SK-N-SH (cell line): ENCODE measurements at regions of chr17 and their contacts with region 1.

Region 1: DNA sequence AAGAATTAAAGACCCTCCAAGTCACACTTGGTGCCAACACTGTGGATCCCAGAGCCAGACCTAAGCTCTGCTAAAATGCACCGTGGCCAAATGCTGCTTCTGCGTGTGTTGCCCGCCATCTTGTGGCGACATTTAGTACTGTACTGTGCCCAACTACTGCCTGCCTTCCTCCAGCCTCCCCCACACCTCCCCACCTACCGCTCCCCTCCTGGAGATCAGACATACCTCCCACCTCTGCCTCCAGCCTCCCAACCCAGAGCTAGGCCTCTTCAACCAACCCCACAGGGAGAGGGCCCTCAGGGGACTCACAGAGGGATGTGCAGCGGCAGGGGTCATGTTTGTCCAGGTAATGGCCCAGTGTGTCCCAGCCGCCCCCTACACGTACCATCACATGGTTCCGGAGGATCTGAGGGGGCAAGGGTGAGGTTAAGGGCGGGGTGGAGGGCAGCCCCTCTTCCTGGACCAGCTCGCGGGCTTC is 5.5 kb downstream of the GAS2L2 start:
- DNase-seq: peak; percentile 89
- H3K4me3 ChIP-seq: no peak overlapping the region; a peak in 1 of 4 replicates
- H3K27ac ChIP-seq: no peak overlapping the region
- H3K4me1 ChIP-seq: peaks cover 0 to 15% of the 10 kb centered on the region in 2 experiments; a peak in 1 of 4 replicates
- H3K27me3 ChIP-seq: peaks cover 11% of the 10 kb centered on the region
- CTCF ChIP-seq: peak; percentile 83
- EP300 ChIP-seq: no peak
- RAD21 ChIP-seq: peak; percentile 98

Region 2: DNA sequence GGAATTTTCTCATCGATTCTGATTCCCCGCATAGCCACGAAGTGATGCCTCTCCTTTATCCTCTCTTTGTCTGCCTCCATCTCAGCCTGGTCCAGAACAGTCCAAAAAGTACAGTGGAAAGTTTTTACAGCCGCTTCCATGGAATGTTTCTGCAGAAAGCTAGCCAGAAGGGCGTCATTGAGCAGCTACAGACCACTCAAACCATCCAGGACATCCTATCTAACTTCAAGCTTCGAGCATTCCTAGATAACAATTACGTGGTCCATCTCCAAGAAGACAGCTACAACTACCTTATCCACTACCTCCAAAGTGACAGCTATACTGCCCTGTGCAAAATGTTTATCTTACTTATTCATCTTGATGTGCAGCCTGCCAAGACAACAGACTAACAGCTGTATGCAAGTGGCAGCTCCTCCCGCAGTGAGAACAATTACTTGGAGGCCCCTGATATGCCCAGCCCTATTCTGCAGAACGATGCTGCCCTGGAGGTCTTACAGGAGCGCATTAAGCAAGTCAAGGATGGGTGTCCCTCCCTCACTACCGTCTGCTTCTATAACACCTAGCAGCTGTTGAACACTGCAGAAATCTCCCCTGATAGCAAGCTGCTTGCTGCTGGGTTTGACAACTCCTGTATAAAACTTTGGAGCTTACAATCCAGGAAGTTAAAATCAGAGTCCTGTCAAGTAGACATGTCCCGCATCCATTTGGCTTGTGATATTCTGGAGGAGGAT is 249.0 kb before region 1 on chr17:
- CTCF ChIA-PET with region 1: no interaction called
- POLR2A ChIA-PET with region 1: no interaction called
- DNase-seq: no peak
- H3K4me3 ChIP-seq: no peak overlapping the region
- H3K27ac ChIP-seq: no peak overlapping the region
- H3K4me1 ChIP-seq: no peaks in the 10 kb centered on the region
- H3K27me3 ChIP-seq: peaks cover 66% of the 10 kb centered on the region
- CTCF ChIP-seq: no peak
- EP300 ChIP-seq: no peak
- RAD21 ChIP-seq: no peak

Region 3: GRCh38 chr17:35560703-35561102 is 186.9 kb before region 1 on chr17 and contains the start of gene SLFN14:
- CTCF ChIA-PET with region 1: interaction called, 15 read pairs
- POLR2A ChIA-PET with region 1: no interaction called
- DNase-seq: no peak
- H3K4me3 ChIP-seq: no peak within 1 kb of the TSS
- H3K27ac ChIP-seq: no peak within 1 kb of the TSS
- H3K4me1 ChIP-seq: no peaks in the 10 kb centered on the region
- H3K27me3 ChIP-seq: peaks cover 34% of the 10 kb centered on the region
- CTCF ChIP-seq: no peak
- EP300 ChIP-seq: no peak
- RAD21 ChIP-seq: no peak
- polyA plus RNA-seq, gene SLFN14: not detected in 2 replicates

Region 4: GRCh38 chr17:35605678-35606077 is 141.9 kb before region 1 on chr17:
- CTCF ChIA-PET with region 1: interaction called, 275 read pairs
- POLR2A ChIA-PET with region 1: no interaction called
- DNase-seq: no peak
- H3K4me3 ChIP-seq: no peak overlapping the region
- H3K27ac ChIP-seq: peak overlapping the region in 1 of 2 experiments; percentile 34; a peak in 2 of 4 replicates
- H3K4me1 ChIP-seq: no peaks in the 10 kb centered on the region
- H3K27me3 ChIP-seq: no peaks in the 10 kb centered on the region
- CTCF ChIP-seq: no peak
- EP300 ChIP-seq: no peak
- RAD21 ChIP-seq: no peak

Region 5: DNA sequence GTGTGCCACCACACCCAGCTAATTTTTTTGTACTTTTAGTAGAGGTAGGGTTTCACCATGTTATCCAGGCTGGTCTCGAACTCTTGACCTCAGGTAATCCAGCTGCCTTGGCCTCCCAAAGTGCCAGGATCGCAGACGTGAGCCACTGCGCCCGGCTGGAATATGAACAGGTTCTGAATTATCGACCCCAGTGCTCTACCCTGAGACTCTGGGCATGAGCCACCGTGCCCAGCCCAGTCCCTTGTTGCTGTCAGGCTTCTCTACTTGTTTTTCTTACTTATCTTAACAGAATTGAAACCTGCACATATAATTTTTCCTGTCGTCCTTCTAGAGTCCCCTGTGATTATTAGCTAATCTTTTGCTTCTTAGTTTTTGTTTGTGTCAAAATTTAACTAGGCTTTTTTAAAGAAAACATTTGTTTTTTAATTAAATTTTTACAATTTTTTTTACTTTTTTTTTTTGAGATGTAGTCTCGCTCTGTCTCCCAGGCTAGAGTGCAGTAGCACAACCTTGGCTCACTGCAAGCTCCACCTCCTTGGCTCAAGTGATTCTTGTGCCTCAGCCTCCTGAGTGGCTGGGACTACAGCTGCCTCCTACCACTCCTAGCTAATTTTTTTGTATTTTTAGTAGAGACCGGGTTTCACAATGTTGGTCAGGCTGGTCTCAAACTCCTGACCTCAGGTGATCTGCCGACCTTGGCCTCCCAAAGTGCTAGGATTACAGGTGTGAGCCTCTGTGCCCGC is 93.8 kb before region 1 on chr17:
- CTCF ChIA-PET with region 1: interaction called, 19 read pairs
- POLR2A ChIA-PET with region 1: no interaction called
- DNase-seq: no peak
- H3K4me3 ChIP-seq: no peak overlapping the region
- H3K27ac ChIP-seq: no peak overlapping the region
- H3K4me1 ChIP-seq: no peaks in the 10 kb centered on the region
- H3K27me3 ChIP-seq: no peaks in the 10 kb centered on the region
- CTCF ChIP-seq: no peak
- EP300 ChIP-seq: no peak
- RAD21 ChIP-seq: no peak

Region 6: DNA sequence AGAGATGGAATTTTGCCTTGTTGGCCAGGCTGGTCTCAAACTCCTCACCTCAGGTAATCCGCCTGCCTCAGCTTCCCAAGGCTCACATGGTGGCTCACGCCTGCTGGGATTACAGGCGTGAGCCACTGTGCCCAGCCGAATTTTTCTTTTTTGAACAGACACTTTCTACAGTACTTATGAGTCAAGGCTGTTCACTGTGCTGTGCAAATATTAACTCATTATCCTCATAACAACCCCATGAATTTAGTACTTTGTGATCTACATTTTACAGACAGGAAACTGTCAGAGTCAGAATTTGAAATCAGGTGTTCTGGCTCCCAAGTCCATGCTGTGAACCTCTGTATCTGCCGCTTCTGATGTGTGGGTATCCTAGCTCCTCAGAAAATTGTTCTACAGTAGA is 41.9 kb before region 1 on chr17:
- CTCF ChIA-PET with region 1: interaction called, 23 read pairs
- POLR2A ChIA-PET with region 1: interaction called, 5 read pairs
- DNase-seq: no peak
- H3K4me3 ChIP-seq: no peak overlapping the region
- H3K27ac ChIP-seq: no peak overlapping the region
- H3K4me1 ChIP-seq: no peaks in the 10 kb centered on the region
- H3K27me3 ChIP-seq: no peaks in the 10 kb centered on the region
- CTCF ChIP-seq: no peak
- EP300 ChIP-seq: no peak
- RAD21 ChIP-seq: no peak

Region 7: DNA sequence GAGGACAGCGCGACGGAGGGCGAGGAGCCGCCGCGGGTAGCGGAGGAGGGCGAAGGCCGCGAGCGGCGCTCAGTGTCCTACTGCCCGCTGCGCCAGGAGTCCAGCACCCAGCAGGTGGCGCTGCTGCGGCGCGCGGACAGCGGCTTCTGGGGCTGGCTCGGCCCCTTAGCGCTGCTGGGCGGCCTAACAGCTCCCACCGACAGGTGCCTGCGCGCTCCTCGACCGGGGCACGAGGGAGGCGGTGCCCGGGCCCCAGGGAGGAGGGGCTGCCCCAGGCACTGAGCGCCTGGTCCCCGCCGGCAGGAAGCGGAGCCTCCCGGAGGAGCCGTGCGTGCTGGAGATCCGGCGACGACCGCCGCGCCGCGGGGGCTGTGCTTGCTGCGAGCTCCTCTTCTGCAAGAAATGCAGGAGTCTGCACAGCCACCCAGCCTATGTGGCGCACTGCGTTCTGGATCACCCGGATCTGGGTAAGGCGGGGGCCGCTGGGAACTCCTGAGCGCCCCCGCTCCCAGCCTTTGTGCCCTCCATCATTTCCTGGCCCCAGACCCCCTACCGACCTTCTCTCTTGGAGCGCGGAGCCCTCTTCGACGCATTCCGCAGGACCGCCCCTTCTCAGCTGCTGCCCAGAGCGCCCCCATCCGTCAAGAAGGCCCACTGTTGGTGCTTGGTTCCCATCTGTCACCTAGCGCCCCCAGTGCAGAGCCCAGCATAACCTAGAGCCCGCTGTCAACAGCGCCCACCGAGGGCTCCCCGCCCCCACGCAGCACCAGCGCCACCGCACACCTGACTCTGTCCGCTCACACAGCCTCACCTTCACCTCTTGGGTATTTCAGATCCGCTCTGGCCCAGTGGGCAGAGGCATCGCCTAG is 16.8 kb after region 1 on chr17:
- CTCF ChIA-PET with region 1: interaction called, 168 read pairs
- POLR2A ChIA-PET with region 1: interaction called, 3 read pairs
- DNase-seq: peak; percentile 98
- H3K4me3 ChIP-seq: peak overlapping the region; percentile 56
- H3K27ac ChIP-seq: peak overlapping the region in 1 of 2 experiments; percentile 77; a peak in 2 of 4 replicates
- H3K4me1 ChIP-seq: peaks cover 0 to 15% of the 10 kb centered on the region in 2 experiments; a peak in 1 of 4 replicates
- H3K27me3 ChIP-seq: no peaks in the 10 kb centered on the region
- CTCF ChIP-seq: peak; percentile 62
- EP300 ChIP-seq: no peak
- RAD21 ChIP-seq: peak; percentile 86